ENCODE measurements at regions of chr5 and their contacts with region 1.

Region 1: DNA sequence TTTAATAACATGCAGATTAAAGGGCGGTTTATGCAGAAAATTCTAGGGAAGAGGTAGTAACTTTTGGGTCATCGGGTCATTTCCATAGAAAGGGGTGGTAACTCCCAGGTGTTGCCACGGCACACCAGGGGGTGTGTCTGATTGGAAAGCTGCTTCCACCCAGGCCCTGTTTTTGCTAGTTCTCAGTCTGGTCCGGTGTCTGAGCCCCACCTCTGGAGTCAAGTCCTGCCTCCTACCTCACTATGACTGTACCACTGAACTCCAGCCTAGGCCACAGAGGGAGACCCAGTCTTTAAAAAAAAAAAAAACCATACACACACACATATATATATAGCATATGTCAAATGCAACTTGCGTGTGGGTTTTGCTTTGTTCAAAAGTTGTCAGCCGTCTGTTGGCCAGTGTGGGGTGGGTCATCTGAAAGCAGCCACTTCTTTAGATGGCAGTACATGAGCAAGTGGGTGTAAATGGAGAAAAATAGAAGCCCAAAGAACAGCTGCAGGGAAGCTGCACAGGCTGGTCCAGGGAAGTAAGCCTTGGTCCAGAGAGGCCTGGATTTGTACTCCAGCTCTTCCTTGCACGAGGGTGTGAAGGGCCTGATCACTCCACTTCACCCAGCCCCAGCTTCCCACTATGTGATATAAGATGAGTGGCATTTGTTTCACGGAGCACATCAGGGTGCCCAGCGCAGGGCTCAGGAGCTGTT is 110.7 kb upstream of the SPRY4 start:
- DNase-seq: no peak
- H3K4me3 ChIP-seq: no peak overlapping the region
- H3K27ac ChIP-seq: no peak overlapping the region
- H3K4me1 ChIP-seq: peaks cover 2 to 9% (median 6%) of the 10 kb centered on the region in 4 experiments; a peak in 5 of 7 replicates
- H3K27me3 ChIP-seq: peaks cover 0 to 2% (median under 1%) of the 10 kb centered on the region in 4 experiments; a peak in 2 of 7 replicates
- CTCF ChIP-seq: no peak
- EP300 ChIP-seq: no peak
- POLR2A ChIP-seq: no peak
- RAD21 ChIP-seq: no peak

Region 2: DNA sequence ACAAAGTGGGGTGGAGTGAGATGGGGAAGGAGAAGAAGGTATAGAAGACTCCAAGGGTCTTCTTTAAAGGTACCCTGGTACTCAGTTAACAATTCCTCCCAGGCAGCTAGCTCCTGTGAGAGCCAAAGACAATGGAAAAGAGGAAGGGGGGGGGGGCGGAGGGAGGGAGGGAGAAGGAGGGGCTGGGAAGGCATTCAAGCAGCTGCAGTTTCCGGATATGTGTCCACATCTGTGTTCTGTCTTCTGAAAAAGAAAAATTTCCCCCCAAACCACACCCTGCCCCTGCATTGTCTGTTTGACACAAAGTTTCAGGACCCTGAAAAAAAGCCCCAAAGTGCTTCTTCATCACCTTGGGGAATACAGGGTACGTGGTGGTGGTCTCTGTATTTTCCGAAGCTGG is 121.9 kb before region 1 on chr5:
- CTCF ChIA-PET with region 1: no interaction called
- POLR2A ChIA-PET with region 1: no interaction called
- DNase-seq: no peak
- H3K4me3 ChIP-seq: no peak overlapping the region
- H3K27ac ChIP-seq: no peak overlapping the region
- H3K4me1 ChIP-seq: peaks cover 2 to 25% (median 11%) of the 10 kb centered on the region in 4 experiments
- H3K27me3 ChIP-seq: no peaks in the 10 kb centered on the region
- CTCF ChIP-seq: no peak
- EP300 ChIP-seq: no peak
- POLR2A ChIP-seq: no peak
- RAD21 ChIP-seq: no peak

Region 3: GRCh38 chr5:142422429-142422828 is 13.1 kb before region 1 on chr5:
- CTCF ChIA-PET with region 1: interaction called, 10 read pairs
- POLR2A ChIA-PET with region 1: interaction called, 3 read pairs
- DNase-seq: no peak
- H3K4me3 ChIP-seq: no peak overlapping the region
- H3K27ac ChIP-seq: no peak overlapping the region
- H3K4me1 ChIP-seq: peaks cover 3 to 11% (median 6%) of the 10 kb centered on the region in 4 experiments
- H3K27me3 ChIP-seq: no peaks in the 10 kb centered on the region
- CTCF ChIP-seq: no peak
- EP300 ChIP-seq: no peak
- POLR2A ChIP-seq: no peak
- RAD21 ChIP-seq: no peak

Region 4: DNA sequence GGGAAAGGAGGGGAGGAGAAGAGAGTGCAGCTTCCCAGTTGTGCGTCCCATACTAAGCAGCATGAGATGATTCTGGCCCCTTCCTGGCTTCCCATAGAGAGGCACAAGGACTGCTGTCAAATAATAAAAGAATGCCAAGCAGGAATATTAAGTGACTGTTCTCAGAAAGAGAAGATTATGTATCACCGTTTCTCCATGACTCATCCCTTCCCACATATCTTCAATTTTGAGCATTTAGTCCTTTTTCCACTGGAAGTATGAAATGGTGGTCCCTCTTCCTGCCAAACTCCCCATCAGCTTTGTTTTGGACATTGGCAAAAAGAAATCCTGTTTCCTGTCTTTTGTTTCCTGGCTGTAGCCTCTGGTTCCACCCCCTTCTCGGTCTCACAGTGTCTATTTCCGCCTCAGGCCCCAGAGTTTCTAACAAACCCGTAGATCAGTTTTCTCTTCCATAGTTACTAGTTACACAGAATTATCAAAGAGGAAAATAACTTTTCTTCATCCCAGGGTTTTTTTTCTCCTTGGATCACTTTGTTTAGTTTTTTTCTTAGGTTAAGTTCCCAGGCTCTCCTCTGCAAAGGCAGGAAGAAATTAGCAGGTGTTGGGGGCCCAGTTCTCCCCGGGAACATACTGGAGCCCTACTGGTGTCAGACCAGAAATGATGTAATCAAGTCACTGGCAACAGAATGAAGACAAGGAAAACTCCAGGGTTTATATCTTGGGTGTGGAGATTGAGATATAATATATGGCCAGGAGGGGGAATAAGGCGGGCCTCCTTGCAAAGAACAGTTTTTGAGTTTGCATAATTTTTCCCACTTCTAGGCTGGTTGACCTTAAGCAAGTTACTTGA is 308.3 kb after region 1 on chr5:
- CTCF ChIA-PET with region 1: no interaction called
- POLR2A ChIA-PET with region 1: no interaction called
- DNase-seq: no peak
- H3K4me3 ChIP-seq: no peak overlapping the region
- H3K27ac ChIP-seq: no peak overlapping the region
- H3K4me1 ChIP-seq: peaks cover 0 to 5% (median 1%) of the 10 kb centered on the region in 4 experiments; a peak in 2 of 7 replicates
- H3K27me3 ChIP-seq: no peaks in the 10 kb centered on the region
- CTCF ChIP-seq: no peak
- EP300 ChIP-seq: no peak
- POLR2A ChIP-seq: no peak
- RAD21 ChIP-seq: no peak